Activated naive CD4-positive, alpha-beta T cell treated with anti-CD3 and anti-CD28 coated beads for 36 hours (primary cell): ENCODE measurements at regions of chr2 and their contacts with region 1.

Region 1: GRCh38 chr2:226904592-226904991 is 68.7 kb downstream of the RHBDD1 start:
- DNase-seq: peak; percentile 54
- H3K4me3 Mint-ChIP-seq: no peak overlapping the region
- H3K27ac Mint-ChIP-seq: no peak overlapping the region
- H3K4me1 Mint-ChIP-seq: peaks cover 47% of the 10 kb centered on the region
- H3K27me3 Mint-ChIP-seq: no peaks in the 10 kb centered on the region

Region 2: DNA sequence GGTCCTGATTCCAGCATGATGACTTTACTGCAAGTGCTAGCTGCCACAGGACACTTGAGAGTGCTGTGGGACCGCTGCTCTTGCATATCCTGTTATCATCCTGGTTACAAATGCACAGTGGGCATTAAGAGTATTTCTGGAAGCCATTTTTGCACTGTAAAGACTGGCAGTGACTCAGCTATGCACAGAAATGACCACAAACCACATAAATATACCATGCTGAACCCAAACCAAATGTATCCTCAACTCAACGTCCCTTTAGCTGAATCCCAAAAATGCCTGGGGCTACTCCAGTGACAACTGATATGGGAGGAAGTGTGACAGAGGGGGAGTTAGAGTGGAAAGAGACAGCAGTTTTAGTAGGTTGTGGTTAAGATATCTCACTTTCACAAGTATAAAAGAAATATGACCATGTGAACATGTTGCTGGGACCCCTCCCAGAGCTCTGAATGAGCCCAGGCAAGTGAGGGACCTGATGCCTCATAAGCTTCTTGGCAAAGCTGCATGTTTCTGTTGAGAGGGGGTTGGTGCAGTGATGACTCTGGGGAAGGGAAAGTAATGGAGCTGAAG is 31.5 kb before region 1 on chr2:
- CTCF ChIA-PET with region 1: interaction called, 3 read pairs
- intact Hi-C with region 1: loop called (anchors 2 kb)
- DNase-seq: peak; percentile 22
- H3K4me3 Mint-ChIP-seq: no peak overlapping the region
- H3K27ac Mint-ChIP-seq: peak overlapping the region; percentile 81
- H3K4me1 Mint-ChIP-seq: peaks cover 32% of the 10 kb centered on the region
- H3K27me3 Mint-ChIP-seq: no peaks in the 10 kb centered on the region